ENCODE measurements at regions of chr4 and their contacts with region 1.

Region 1: DNA sequence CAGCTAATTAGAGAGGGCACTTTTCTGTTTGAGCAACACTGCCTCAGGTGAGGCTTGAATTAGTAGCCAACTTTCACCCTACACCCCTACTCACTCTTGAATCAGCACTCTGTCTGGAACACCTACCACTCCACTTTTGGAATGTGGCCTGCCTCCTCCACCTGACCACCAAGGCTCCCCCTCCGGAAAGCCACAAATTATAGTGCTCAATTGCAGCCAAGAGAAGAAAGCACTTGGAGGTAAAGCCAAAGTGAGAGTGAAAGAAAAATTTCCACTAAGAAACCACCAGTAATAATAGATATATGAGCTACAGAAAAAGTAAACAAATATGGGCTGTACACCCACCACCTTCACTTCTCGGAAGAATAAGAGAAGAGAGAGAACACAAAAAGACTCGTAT is 41.1 kb downstream of the PPP3CA start:
- DNase-seq: peak; percentile 18
- H3K4me3 Mint-ChIP-seq: peak overlapping the region; percentile 30
- H3K27ac Mint-ChIP-seq: no peak overlapping the region
- H3K4me1 Mint-ChIP-seq: peaks cover 42% of the 10 kb centered on the region
- H3K27me3 Mint-ChIP-seq: no peaks in the 10 kb centered on the region

Region 2: DNA sequence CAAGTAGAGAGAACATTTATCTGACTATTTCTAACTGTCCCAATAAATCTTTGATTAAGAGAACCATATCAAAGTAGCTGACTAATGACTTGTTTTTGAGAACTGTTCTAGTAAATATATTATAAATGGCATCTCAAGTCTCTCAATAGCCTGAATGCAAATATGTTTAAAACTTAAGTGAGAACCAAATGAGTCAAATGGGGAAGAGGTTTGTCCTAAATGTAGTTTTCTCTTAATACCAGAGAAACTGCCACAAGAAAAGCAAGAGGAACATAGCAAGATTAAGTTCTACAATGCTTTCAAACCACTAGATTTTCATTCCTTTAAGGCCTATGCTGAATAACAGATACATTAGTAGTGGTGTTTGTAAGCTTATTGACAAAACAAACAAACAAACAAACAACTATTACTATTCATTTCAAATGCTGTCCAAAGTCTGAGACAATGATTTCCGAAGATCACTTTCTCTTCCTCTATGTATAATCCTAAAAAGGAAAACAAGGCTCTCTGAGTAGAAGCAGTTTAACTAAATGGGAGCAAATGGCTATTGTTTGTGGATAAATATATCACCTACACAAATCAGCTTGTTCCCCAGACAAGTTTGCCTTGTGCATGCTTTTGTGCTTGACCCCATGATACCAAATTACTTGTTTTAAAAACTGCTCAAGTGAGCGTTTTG is 380.0 kb before region 1 on chr4:
- CTCF ChIA-PET with region 1: no interaction called
- POLR2A ChIA-PET with region 1: no interaction called
- intact Hi-C with region 1: no loop called
- DNase-seq: no peak
- H3K4me3 Mint-ChIP-seq: no peak overlapping the region
- H3K27ac Mint-ChIP-seq: no peak overlapping the region
- H3K4me1 Mint-ChIP-seq: no peaks in the 10 kb centered on the region
- H3K27me3 Mint-ChIP-seq: no peaks in the 10 kb centered on the region

Region 3: GRCh38 chr4:101458914-101459313 is 152.7 kb after region 1 on chr4:
- CTCF ChIA-PET with region 1: no interaction called
- POLR2A ChIA-PET with region 1: no interaction called
- intact Hi-C with region 1: no loop called
- DNase-seq: no peak
- H3K4me3 Mint-ChIP-seq: no peak overlapping the region
- H3K27ac Mint-ChIP-seq: no peak overlapping the region
- H3K4me1 Mint-ChIP-seq: no peaks in the 10 kb centered on the region
- H3K27me3 Mint-ChIP-seq: peaks cover 25% of the 10 kb centered on the region

Region 4: DNA sequence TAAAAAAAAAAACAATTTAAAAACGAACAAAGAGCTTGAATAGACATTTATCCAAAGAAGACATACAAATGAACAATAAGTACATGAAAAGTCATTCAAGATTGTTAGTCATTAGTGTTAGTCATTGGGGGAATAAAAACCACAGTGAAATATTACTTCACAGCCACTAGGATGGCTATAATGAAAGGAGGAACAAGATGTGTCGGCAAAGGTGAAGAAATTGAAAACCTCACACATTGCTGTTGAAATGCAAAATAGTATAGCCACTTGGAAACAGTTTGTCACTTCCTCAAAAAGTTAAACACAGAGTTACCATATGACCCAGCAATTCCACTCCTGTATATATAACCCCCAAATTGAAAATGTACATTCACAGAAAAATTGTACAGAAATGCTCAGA is 1084.2 kb after region 1 on chr4:
- CTCF ChIA-PET with region 1: no interaction called
- POLR2A ChIA-PET with region 1: no interaction called
- intact Hi-C with region 1: loop called (anchors 5 kb)
- DNase-seq: no peak
- H3K4me3 Mint-ChIP-seq: no peak overlapping the region
- H3K27ac Mint-ChIP-seq: no peak overlapping the region
- H3K4me1 Mint-ChIP-seq: peaks cover 14% of the 10 kb centered on the region
- H3K27me3 Mint-ChIP-seq: peaks cover 15% of the 10 kb centered on the region

Measured in activated CD4-positive, alpha-beta memory T cell treated with anti-CD3 and anti-CD28 coated beads for 36 hours (primary cell).